Mammary epithelial cell (primary cell): ENCODE measurements at regions of chr10 and their contacts with region 1.

Region 1: DNA sequence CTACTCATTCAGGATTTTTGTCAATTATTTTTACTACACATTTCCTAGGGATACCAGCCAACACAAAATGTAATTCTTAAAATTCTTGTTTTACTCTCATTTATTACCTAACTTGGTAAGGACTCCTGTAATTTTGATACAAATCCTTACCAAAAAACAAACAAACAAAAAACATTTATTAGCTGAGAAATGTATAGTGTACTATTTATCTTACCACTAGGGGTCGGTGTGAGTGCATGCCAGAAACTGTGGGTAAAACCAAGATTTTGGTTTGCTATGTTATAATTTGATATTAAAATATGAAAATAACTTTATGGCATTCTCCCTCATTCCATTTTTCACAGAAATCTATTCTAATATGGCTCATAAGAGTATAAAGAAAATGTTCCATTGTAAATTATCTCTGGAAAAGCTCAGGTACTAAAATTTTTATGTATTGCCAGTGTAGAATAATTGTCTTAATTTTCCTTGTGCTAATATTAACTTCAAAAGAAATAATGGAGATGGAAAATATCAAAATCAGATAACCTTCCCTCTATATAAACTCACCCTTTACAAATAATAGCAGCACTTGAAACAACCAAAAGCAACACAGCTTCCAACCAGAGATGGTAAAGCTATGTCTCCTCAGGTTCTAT is 290.8 kb upstream of the PCDH15 start:
- DNase-seq: no peak
- H3K4me3 ChIP-seq: no peak overlapping the region
- H3K27ac ChIP-seq: no peak overlapping the region
- H3K4me1 ChIP-seq: no peaks in the 10 kb centered on the region
- H3K27me3 ChIP-seq: no peaks in the 10 kb centered on the region
- CTCF ChIP-seq: peak; percentile 86 to 91

Region 2: GRCh38 chr10:55263327-55263726 is 171.5 kb after region 1 on chr10:
- CTCF ChIA-PET with region 1: no interaction called
- dilution Hi-C with region 1: no loop called
- in situ Hi-C with region 1: loop called in 1 of 2 experiments (anchors 10 kb)
- intact Hi-C with region 1: loop called (anchors 1 kb)
- DNase-seq: no peak
- H3K4me3 ChIP-seq: no peak overlapping the region
- H3K27ac ChIP-seq: no peak overlapping the region
- H3K4me1 ChIP-seq: no peaks in the 10 kb centered on the region
- H3K27me3 ChIP-seq: peaks cover 2% of the 10 kb centered on the region
- CTCF ChIP-seq: no peak

Region 3: DNA sequence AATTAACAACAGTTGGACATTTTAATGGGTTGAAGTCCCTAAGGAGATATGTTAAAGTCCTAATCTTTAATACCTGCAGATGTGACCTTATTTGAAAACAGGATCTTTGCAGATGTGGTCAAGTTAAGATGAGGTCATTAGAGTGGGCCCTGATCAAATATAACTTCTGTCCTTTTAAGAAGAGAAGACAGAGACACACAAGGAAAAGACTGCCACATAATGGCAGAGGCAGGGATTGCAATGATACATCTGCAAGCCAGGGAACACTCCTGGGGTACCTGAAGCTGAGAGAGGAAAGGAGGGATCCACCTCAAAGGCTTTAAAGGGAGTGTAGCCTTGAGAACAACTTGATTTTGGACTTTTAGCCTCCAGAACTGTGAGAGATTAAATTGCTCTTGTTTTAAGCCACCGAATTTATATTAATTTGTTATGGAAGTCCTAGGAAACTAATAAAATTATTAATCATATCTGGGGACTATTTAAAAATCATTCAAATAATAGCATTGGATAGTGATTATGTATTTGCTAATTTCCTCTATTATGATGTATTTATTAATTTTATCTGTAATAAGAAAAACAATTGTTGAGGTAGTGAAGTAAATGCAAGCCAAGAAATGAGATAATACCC is 409.2 kb after region 1 on chr10:
- CTCF ChIA-PET with region 1: no interaction called
- dilution Hi-C with region 1: no loop called
- in situ Hi-C with region 1: no loop called
- intact Hi-C with region 1: loop called (anchors 1 kb)
- DNase-seq: peak; percentile 20
- H3K4me3 ChIP-seq: no peak overlapping the region
- H3K27ac ChIP-seq: no peak overlapping the region
- H3K4me1 ChIP-seq: no peaks in the 10 kb centered on the region
- H3K27me3 ChIP-seq: no peaks in the 10 kb centered on the region
- CTCF ChIP-seq: peak; percentile 56 to 77

Region 4: DNA sequence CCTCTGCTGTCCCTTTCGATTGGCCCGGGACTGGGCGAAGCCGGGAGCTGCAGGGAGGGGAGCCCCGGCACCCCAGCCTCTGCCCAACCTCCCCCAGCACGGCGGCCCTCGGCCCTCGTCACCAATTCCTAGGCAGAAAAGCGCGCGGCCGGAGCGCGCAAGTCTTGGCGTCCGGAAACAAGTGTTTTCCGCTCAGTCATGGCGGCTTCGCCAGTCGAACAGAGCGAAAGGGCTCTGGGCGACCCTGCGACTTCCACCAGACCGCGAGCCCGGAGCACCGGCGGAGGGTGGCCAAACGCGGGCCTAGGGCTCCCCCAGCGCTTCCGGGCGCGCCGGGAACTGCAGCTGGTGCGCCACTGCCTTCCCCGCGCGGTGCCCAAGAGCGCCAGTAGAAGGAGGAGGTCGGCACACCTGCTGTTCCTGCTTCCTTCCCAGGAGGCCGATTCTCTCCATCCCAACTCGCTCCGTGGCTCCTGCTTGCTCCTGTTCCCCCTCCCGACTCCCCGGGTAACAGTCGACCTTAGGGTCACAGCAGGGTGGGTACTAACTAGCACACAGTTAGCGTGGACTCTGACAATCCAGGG is 539.4 kb after region 1 on chr10:
- CTCF ChIA-PET with region 1: no interaction called
- dilution Hi-C with region 1: no loop called
- in situ Hi-C with region 1: no loop called
- intact Hi-C with region 1: loop called (anchors 10 kb)
- DNase-seq: peak; percentile 27
- H3K4me3 ChIP-seq: peak overlapping the region; percentile 33 to 38 (median 38)
- H3K27ac ChIP-seq: no peak overlapping the region
- H3K4me1 ChIP-seq: peaks cover 11% of the 10 kb centered on the region
- H3K27me3 ChIP-seq: peaks cover 38% of the 10 kb centered on the region
- CTCF ChIP-seq: peak; percentile 44 to 79